Adrenal gland (tissue), 19 donors: ENCODE measurements at regions of chr18 and their contacts with region 1.

Region 1: GRCh38 chr18:77000527-77000926 is 132.1 kb downstream of the MBP start:
- DNase-seq: peak in 6 of 7 donors; percentile 41 to 76 (median 54)
- H3K4me3 ChIP-seq: no peak overlapping the region
- H3K27ac ChIP-seq: no peak overlapping the region
- H3K4me1 ChIP-seq: peaks cover 0 to 5% of the 10 kb centered on the region in 2 donors
- H3K27me3 ChIP-seq: no peaks in the 10 kb centered on the region
- CTCF ChIP-seq: peak; percentile 84 to 98 (median 96)
- POLR2A ChIP-seq: no peak

Region 2: DNA sequence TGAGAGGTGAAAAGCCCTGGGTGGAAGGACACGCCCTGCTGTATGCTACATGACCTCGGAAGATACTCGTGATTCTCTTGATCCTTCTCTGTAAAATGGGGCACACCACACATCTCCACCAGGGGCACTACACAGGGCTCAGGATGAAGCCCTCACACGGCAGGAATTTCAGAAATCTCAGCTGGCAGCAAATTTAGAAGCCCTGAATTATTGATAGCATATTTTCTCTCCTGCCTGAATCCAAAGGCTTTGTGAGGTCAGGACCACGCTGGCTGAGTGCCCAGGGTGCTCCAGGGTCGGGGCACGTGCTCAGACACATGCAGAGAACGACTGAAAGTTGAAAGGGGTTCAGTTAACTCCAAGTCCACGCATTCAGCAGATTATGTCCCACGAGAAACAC is 207.0 kb after region 1 on chr18:
- intact Hi-C with region 1: loop called (anchors 5 to 10 kb)
- DNase-seq: peak; percentile 45 to 93 (median 85)
- H3K4me3 ChIP-seq: no peak overlapping the region
- H3K27ac ChIP-seq: peak overlapping the region in 4 of 5 donors; percentile 4 to 88 (median 52)
- H3K4me1 ChIP-seq: peaks cover 5 to 31% of the 10 kb centered on the region in 2 donors
- H3K27me3 ChIP-seq: no peaks in the 10 kb centered on the region
- CTCF ChIP-seq: peak; percentile 43 to 75 (median 54)
- POLR2A ChIP-seq: no peak